ENCODE measurements at regions of chr3 and their contacts with region 1.

Region 1: GRCh38 chr3:151183265-151183671 is 19.7 kb downstream of the GPR171 start:
- DNase-seq: no peak
- H3K4me3 ChIP-seq: no peak overlapping the region
- H3K27ac ChIP-seq: no peak overlapping the region
- H3K4me1 ChIP-seq: no peaks in the 10 kb centered on the region
- H3K27me3 ChIP-seq: no peaks in the 10 kb centered on the region
- CTCF ChIP-seq: no peak

Region 2: DNA sequence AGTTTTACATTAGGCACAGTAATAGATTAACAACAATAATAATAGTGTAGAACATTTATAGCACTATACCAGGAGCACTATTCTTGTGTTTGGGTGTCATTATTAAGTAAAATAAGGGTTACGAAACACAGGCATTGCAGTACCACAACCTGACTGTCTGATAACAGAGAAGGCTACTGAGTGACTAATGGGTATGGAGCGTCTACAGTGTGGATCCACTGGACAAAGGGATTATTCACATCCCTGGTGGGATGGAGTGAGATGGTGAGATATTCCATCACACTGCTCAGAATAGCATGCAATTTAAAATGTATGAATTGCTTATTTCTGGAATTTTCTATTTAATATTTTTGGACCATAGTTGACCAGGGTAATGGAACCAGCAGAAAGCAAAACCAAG is 296.2 kb before region 1 on chr3:
- CTCF ChIA-PET with region 1: no interaction called
- POLR2A ChIA-PET with region 1: no interaction called
- intact Hi-C with region 1: no loop called
- DNase-seq: no peak
- H3K4me3 ChIP-seq: no peak overlapping the region
- H3K27ac ChIP-seq: no peak overlapping the region
- H3K4me1 ChIP-seq: no peaks in the 10 kb centered on the region
- H3K27me3 ChIP-seq: no peaks in the 10 kb centered on the region
- CTCF ChIP-seq: no peak

Region 3: DNA sequence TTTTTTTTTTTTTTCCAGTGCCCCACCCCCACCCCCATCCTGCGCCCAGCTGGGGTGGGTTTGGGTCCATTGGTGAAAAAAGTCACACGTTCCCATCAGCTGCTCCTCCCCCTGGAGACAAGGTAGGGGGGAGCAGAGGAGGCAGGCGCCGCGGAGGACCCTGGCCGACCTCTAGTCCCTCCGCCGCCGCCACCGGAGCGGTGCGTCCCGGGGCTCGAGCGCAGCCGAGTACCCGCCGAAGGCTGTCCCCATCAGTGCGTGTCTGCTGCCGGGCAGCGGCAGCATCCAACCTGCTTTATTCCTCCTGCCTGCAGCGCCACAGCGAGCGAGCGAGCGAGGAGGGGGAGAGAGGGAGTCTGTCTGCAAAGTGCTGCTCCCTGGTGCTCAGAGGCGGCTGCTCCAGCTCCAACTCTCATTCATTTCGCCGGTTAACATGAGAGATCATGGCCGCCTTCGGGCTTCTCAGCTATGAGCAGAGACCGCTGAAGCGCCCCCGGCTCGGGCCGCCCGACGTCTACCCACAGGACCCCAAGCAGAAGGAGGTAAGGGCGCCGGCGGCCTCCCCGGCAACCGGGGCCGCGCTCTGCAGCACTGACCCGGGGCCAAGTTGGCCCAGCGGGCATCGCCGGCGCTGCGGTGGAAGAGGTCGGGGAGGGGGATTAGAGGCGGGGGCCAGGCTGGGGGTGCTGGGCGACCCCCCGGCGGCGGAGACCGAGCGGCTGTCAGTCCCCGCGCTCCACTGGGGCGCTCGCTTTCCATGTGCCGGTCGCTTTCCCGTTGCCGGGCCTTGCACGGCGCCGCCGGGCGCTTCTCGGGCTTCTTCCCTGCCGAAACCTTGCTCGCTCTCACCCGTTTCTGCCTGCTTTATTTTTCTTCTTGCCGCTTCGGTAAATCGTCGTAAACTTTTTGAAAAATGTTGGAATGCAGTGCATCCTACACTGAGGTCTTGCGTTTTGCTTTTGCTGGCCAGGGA is 96.5 kb before region 1 on chr3:
- CTCF ChIA-PET with region 1: no interaction called
- POLR2A ChIA-PET with region 1: interaction called, 18 read pairs
- intact Hi-C with region 1: no loop called
- DNase-seq: peak; percentile 62 to 73
- H3K4me3 ChIP-seq: peak overlapping the region; percentile 74
- H3K27ac ChIP-seq: no peak overlapping the region
- H3K4me1 ChIP-seq: no peaks in the 10 kb centered on the region
- H3K27me3 ChIP-seq: no peaks in the 10 kb centered on the region
- CTCF ChIP-seq: 0 out of 2 replicates have a peak, but pooled peaks have one; percentile 28

Region 4: GRCh38 chr3:151200586-151200985 is 17.3 kb after region 1 on chr3:
- CTCF ChIA-PET with region 1: no interaction called
- POLR2A ChIA-PET with region 1: interaction called, 10 read pairs
- intact Hi-C with region 1: no loop called
- DNase-seq: no peak
- H3K4me3 ChIP-seq: no peak overlapping the region
- H3K27ac ChIP-seq: no peak overlapping the region
- H3K4me1 ChIP-seq: no peaks in the 10 kb centered on the region
- H3K27me3 ChIP-seq: no peaks in the 10 kb centered on the region
- CTCF ChIP-seq: no peak

Region 5: GRCh38 chr3:151210676-151211381 is 27.6 kb after region 1 on chr3:
- CTCF ChIA-PET with region 1: no interaction called
- POLR2A ChIA-PET with region 1: interaction called, 24 read pairs
- intact Hi-C with region 1: no loop called
- DNase-seq: no peak
- H3K4me3 ChIP-seq: no peak overlapping the region
- H3K27ac ChIP-seq: no peak overlapping the region
- H3K4me1 ChIP-seq: peaks cover 10% of the 10 kb centered on the region; the same call in 1 of the 2 replicates
- H3K27me3 ChIP-seq: no peaks in the 10 kb centered on the region
- CTCF ChIP-seq: 0 out of 2 replicates have a peak, but pooled peaks have one; percentile 20